Aorta (tissue), 5 donors: ENCODE measurements at regions of chr6 and their contacts with region 1.

Region 1: DNA sequence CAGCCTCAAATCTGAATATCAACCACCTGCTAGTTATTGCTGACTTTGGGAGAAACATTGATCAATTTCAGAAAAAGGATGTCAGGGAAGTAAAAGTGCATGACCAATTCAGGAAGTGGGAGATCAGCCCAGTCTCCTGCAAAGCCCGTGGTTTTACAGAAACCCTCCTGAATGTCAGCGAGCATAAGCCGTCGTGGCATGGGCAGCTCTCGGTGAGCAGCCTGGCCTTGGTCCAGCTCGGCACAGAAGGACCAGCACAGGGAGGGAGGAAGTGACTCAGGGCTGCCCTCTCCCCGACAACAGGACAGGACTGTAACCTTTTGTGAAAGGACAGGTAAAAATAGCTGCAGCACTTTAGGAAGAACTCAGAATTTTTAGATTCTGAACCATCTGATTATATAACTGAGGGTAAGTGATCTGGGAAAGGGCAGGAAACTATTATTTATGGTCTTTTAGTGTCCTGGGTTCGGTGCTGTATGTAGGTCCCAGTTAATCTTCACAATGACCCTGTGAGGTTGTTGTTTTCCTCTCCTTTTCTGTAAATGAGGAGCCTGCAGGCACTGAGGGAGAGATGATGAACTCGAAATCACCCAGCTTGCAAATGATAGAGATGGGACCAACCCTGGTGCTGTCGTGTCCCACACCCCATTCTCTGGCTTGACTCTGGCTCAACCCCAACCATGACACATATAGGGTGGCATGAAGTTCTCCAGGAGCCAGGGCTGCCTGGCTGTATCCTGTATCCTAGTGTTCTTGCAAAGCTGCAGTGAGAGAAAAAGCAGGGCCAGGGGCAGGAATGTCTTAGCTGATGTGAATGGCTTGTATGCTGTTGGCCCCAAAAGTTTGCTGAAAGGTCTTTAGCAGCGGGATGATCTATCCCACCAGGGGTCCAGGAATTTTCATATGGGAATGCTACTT is 37.6 kb downstream of the NRN1 start:
- DNase-seq: peak; percentile 87 to 93
- ATAC-seq: peak; percentile 67
- H3K4me3 ChIP-seq: no peak overlapping the region
- H3K27ac ChIP-seq: no peak overlapping the region
- H3K4me1 ChIP-seq: peaks cover 0 to 5% of the 10 kb centered on the region in 2 donors
- H3K27me3 ChIP-seq: no peaks in the 10 kb centered on the region

Region 2: DNA sequence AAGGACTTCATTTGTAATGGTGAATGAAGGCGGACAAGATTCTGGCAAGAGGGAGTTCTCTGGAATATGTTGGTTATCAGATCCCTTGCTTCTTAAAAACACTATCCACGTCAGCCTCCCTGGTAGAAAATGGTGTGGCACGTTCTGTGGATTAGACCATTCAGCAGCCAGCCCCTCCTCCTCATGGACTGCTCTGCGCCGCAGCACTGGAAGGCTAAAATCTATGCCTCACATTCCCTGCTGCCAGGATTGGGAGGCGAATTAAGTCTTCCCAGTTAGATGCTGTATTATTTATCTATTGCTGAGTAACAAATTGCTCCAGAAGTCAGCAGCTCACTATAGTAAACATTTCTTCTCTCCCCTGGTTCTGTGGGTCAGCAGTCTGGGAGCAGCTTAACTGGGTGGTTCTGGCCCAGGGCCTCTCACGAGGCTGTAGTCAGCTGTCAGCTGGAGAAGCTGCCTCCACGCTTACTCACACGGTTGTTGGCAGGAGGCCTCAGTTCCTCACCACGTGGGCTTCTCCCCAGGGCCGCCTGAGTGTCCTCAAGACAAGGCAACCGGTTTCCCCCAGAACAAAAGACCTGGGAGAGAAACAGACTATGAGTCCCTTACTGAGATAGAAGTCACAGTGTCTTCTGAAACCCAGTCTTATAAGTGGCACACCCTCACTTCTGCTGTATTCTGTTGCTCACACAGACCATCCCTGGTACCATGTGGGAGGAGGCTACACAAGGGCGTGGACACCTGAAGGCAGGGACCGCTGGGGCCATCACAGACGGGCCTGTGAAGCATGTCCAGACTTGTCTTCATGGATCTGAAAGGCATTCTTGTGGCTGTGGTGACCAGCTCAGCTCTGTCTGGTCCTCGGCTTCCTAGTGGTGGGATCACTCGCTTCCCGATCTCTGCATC is 63.4 kb before region 1 on chr6:
- intact Hi-C with region 1: no loop called
- DNase-seq: peak; percentile 89 to 94
- ATAC-seq: peak; percentile 94
- H3K4me3 ChIP-seq: no peak overlapping the region
- H3K27ac ChIP-seq: peak overlapping the region in 1 of 2 donors; percentile 45
- H3K4me1 ChIP-seq: peaks cover 0 to 4% of the 10 kb centered on the region in 2 donors
- H3K27me3 ChIP-seq: no peaks in the 10 kb centered on the region

Region 3: DNA sequence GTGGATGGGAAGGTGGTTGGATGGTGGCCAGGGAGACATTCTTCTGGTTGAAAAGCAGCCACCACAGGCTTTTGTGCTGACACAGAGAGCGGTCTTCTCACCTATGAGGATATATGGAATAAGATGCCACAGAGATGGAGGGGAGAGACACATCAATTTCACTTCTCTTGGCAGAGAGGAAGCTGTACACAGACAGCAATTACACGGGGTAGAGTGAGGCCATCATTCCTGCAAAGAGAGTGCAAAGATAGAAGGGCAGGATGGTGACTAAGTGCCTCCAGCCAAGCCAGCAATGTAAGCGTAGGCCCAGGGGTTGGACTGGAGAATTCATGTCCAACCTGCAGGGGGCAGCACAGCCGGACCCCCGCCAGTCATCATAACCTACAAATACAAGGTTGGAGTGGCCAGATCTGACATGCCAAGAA is 18.7 kb before region 1 on chr6:
- intact Hi-C with region 1: no loop called
- DNase-seq: no peak
- ATAC-seq: peak; percentile 56
- H3K4me3 ChIP-seq: no peak overlapping the region
- H3K27ac ChIP-seq: no peak overlapping the region
- H3K4me1 ChIP-seq: no peaks in the 10 kb centered on the region
- H3K27me3 ChIP-seq: no peaks in the 10 kb centered on the region

Region 4: GRCh38 chr6:6003621-6004366 is 34.7 kb after region 1 on chr6:
- intact Hi-C with region 1: loop called in 1 of 2 experiments (anchors 5 kb)
- DNase-seq: peak in 1 of 2 donors; percentile 80
- ATAC-seq: no peak
- H3K4me3 ChIP-seq: no peak overlapping the region
- H3K27ac ChIP-seq: no peak overlapping the region
- H3K4me1 ChIP-seq: no peaks in the 10 kb centered on the region
- H3K27me3 ChIP-seq: peaks cover 0 to 2% of the 10 kb centered on the region in 2 donors